ENCODE measurements at regions of chr3 and their contacts with region 1.

Region 1: GRCh38 chr3:196073188-196073838 is 8.6 kb downstream of the TFRC start:
- DNase-seq: peak; percentile 17 to 59
- ATAC-seq: peak; percentile 88 to 93 (median 91)
- H3K4me3 ChIP-seq: no peak overlapping the region
- H3K27ac ChIP-seq: no peak overlapping the region
- H3K4me1 ChIP-seq: peaks cover 0 to 19% (median 6%) of the 10 kb centered on the region in 9 donors
- H3K27me3 ChIP-seq: no peaks in the 10 kb centered on the region
- CTCF ChIP-seq: peak; percentile 39 to 83 (median 78)

Region 2: DNA sequence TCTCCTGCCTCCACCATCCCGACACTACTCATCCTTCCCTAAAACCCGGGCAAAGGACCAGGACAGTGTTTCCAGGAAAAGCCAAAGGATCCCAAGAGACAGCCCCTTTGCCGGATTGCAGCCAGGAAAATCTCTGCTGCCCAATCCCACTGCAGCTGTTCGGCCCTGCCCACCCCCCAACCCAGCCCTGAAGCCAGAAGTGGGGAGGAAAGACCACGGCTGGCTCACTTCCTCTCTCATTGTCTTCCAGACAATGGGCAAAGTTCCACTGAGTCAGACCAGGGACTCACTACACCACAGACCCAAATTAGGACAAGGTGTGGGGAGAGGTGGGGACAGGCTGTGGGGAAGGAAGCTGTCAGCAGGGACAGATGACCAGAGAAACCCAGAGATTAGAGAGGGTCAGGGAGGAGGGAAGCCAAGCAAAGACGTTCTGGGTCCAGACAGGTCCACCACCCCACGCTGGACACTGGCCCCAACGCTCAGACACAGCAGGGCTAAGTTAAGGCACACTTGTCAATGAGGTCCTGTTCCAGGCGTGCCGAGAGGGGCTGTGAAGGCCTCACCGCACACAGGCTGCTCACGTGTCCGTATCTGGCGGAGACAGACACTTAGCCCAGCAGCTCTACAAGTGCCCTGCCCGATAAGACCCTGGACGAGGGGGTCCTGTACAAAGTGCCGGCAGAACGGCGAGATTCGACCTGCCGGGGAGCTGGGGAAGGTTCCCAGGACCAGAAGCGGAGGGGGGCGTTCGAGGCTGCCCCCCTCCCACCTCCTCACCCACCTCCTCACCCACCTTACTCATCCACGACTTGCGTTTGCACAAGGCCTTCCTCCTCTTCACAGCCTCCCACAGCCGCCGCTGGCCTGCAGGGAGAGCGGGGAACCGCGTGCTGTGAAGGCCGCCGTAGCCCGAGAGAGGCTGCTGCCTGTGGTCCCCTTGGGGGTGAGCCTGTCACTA is 186.9 kb before region 1 on chr3:
- intact Hi-C with region 1: no loop called
- DNase-seq: peak; percentile 50 to 54
- ATAC-seq: peak; percentile 54 to 85 (median 71)
- H3K4me3 ChIP-seq: peak overlapping the region in 1 of 10 donors; percentile 18
- H3K27ac ChIP-seq: peak overlapping the region; percentile 17 to 90 (median 80)
- H3K4me1 ChIP-seq: peaks cover 17 to 67% (median 50%) of the 10 kb centered on the region in 9 donors
- H3K27me3 ChIP-seq: no peaks in the 10 kb centered on the region
- CTCF ChIP-seq: no peak

Region 3: GRCh38 chr3:196016485-196016884 is 56.8 kb before region 1 on chr3:
- intact Hi-C with region 1: no loop called
- DNase-seq: no peak
- ATAC-seq: no peak
- H3K4me3 ChIP-seq: no peak overlapping the region
- H3K27ac ChIP-seq: no peak overlapping the region
- H3K4me1 ChIP-seq: no peaks in the 10 kb centered on the region
- H3K27me3 ChIP-seq: peaks cover 0 to 2% (median 0%) of the 10 kb centered on the region in 7 donors
- CTCF ChIP-seq: no peak

Region 4: GRCh38 chr3:196192036-196192523 is 118.8 kb after region 1 on chr3:
- intact Hi-C with region 1: loop called (anchors 1 to 5 kb)
- DNase-seq: no peak
- ATAC-seq: no peak
- H3K4me3 ChIP-seq: no peak overlapping the region
- H3K27ac ChIP-seq: peak overlapping the region in 8 of 10 donors; percentile 62 to 95 (median 83)
- H3K4me1 ChIP-seq: peaks cover 0 to 49% (median 20%) of the 10 kb centered on the region in 9 donors
- H3K27me3 ChIP-seq: no peaks in the 10 kb centered on the region
- CTCF ChIP-seq: no peak

Region 5: GRCh38 chr3:196198771-196199753 is 125.7 kb after region 1 on chr3:
- intact Hi-C with region 1: loop called (anchors 1 to 5 kb)
- DNase-seq: no peak
- ATAC-seq: no peak
- H3K4me3 ChIP-seq: no peak overlapping the region
- H3K27ac ChIP-seq: no peak overlapping the region
- H3K4me1 ChIP-seq: peaks cover 0 to 14% (median 5%) of the 10 kb centered on the region in 9 donors
- H3K27me3 ChIP-seq: peaks cover 0 to 4% (median 0%) of the 10 kb centered on the region in 7 donors
- CTCF ChIP-seq: peak in 1 of 9 donors; percentile 14

Region 6: DNA sequence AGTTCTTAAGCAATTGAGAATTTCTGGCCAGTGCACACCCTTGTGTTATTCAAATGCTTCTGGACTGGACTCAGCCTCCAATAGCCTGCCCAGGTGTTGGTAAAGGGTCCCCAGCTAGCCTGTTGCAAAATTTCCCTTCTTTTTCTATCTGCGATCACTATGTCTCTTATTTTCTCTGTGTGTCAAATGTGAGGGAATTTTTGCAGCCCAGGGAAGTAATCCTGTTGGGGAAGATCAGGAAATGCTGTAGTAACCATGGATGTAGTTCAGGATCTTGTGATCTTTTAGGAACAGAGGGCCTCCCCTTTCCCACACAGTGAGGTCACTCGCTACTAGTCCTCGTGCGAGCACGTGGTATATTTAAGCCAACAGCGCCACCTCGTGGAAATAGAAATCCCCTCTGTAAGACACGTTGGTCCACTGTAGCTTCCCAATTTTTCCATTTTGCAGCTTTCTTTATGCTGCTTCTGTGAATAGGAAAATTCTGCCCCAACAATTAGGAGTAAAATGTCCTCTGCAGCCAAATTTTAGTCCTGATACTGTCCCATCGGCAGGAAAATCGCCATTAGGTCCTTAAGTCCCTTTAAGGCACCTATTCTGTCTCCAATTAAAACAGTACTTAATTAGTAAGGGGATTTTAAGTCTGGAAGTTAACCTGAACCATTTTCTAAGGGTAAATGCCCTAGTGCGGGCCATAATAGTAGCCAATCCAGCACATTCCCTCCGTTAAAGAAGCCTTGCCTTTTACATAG is 445.8 kb after region 1 on chr3:
- intact Hi-C with region 1: loop called in 2 of 10 experiments (anchors 10 kb)
- DNase-seq: peak; percentile 29 to 75
- ATAC-seq: peak; percentile 72 to 84 (median 79)
- H3K4me3 ChIP-seq: no peak overlapping the region
- H3K27ac ChIP-seq: peak overlapping the region in 2 of 10 donors; percentile 31 to 39
- H3K4me1 ChIP-seq: peaks cover 0 to 20% (median 0%) of the 10 kb centered on the region in 9 donors
- H3K27me3 ChIP-seq: no peaks in the 10 kb centered on the region
- CTCF ChIP-seq: peak; percentile 42 to 74 (median 64)

Region 7: GRCh38 chr3:196547067-196547466 is 473.8 kb after region 1 on chr3:
- intact Hi-C with region 1: no loop called
- DNase-seq: no peak
- ATAC-seq: no peak
- H3K4me3 ChIP-seq: no peak overlapping the region
- H3K27ac ChIP-seq: no peak overlapping the region
- H3K4me1 ChIP-seq: no peaks in the 10 kb centered on the region
- H3K27me3 ChIP-seq: no peaks in the 10 kb centered on the region
- CTCF ChIP-seq: no peak

Measured in heart right ventricle (tissue), 16 donors.